Activated T-helper 1 cell treated with anti-CD3 and anti-CD28 coated beads, Interleukin-12 subunit alpha, Interleukin-12 subunit beta, Interleukin-2, Interleukin-4 antibody, amounts not matched to agents 30 ng/mL and 10 ng/mL and 1 ng/mL, durations not matched to agents 14 hours and 24 hours and 36 hours (primary cell): ENCODE measurements at regions of chr15 and their contacts with region 1.

Region 1: GRCh38 chr15:57213862-57214261 is 162.4 kb upstream of the CGNL1 start:
- DNase-seq: no peak
- H3K4me3 Mint-ChIP-seq: no peak overlapping the region
- H3K27ac Mint-ChIP-seq: no peak overlapping the region
- H3K4me1 Mint-ChIP-seq: peaks cover 1% of the 10 kb centered on the region
- H3K27me3 Mint-ChIP-seq: no peaks in the 10 kb centered on the region

Region 2: GRCh38 chr15:56464893-56465520 is 748.9 kb before region 1 on chr15 and contains the start of gene MNS1:
- intact Hi-C with region 1: loop called (anchors 10 kb)
- DNase-seq: peak; percentile 70
- H3K4me3 Mint-ChIP-seq: peak within 1 kb of the TSS; percentile 93
- H3K27ac Mint-ChIP-seq: peak within 1 kb of the TSS; percentile 74
- H3K4me1 Mint-ChIP-seq: peaks cover 28% of the 10 kb centered on the region
- H3K27me3 Mint-ChIP-seq: peaks cover 32% of the 10 kb centered on the region
- total RNA-seq, gene MNS1: 0.17 and 0.44 TPM in 2 replicates

Region 3: GRCh38 chr15:56491110-56491722 is 722.6 kb before region 1 on chr15:
- intact Hi-C with region 1: loop called (anchors 1 kb)
- DNase-seq: peak; percentile 43
- H3K4me3 Mint-ChIP-seq: no peak overlapping the region
- H3K27ac Mint-ChIP-seq: no peak overlapping the region
- H3K4me1 Mint-ChIP-seq: no peaks in the 10 kb centered on the region
- H3K27me3 Mint-ChIP-seq: no peaks in the 10 kb centered on the region

Region 4: DNA sequence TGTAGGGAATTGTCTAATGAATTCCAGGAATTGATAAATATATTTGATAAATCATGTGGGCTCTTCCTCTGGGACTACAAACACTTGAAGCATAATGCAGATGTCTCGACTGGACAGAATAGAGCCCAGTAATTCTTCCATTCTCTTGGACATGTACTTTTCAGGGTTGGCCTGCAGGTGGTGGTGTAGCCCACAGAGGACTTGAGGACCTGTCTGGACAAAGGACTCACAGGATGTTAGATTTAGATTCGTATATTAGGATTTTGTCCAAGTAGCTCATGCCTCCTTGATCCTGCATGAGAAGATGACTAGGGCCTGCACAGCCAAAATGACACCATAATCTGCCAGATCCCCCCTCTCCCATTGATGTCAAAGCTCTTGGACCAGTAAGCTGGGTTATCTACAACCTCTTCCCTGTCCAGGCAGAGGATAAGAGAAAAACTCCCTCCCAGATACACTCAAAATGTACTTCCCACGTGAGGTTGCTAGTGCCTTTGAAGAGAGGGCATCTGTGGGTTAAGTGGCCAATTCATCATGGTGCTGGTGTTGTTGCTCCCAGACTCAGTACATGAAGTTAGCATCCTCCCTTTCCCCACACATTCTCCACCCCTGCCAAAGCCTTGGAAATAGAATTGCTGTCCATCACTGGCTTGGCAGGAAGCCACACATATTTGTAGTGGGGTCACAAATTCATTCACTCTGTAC is 392.0 kb before region 1 on chr15:
- intact Hi-C with region 1: loop called (anchors 10 kb)
- DNase-seq: peak; percentile 7
- H3K4me3 Mint-ChIP-seq: no peak overlapping the region
- H3K27ac Mint-ChIP-seq: no peak overlapping the region
- H3K4me1 Mint-ChIP-seq: peaks cover 7% of the 10 kb centered on the region
- H3K27me3 Mint-ChIP-seq: peaks cover 7% of the 10 kb centered on the region

Region 5: DNA sequence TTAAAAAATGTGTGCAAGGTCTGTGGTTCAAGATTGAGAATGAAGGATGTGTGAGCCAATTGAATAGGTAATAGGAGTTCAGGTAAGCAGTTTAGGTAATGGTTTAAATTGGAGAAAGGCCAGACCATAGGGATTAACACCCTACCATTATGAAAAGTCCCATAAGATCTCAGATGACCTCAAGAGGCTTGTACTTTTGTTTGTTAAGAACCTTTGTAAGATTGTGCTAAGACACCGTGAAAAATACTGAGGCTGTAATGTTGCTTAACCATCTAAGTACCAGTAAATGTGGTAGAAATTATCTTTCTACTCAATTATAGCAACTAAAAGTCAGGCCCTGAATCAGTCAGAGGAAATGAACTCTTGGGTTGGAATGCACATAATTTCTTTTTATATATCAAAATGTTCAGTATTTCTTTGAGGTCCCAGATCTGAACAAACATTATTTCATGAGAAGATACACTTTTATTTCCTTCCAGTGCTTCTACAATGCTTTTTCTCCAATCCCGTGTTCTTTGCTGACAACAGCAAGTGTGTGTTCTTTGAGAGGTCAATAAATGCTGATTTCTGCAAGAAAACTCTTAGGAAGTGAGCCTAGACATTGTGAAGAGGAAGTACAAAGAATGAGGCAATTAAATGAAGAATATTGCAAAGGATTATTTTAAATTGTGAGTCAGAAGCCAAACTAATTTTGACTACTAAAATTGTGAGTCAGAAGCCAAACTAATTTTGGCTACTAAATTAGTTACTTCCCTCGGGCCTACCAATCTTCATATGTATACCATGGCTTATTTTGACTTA is 229.0 kb before region 1 on chr15:
- intact Hi-C with region 1: loop called (anchors 10 kb)
- DNase-seq: no peak
- H3K4me3 Mint-ChIP-seq: no peak overlapping the region
- H3K27ac Mint-ChIP-seq: no peak overlapping the region
- H3K4me1 Mint-ChIP-seq: peaks cover 25% of the 10 kb centered on the region
- H3K27me3 Mint-ChIP-seq: no peaks in the 10 kb centered on the region

Region 6: DNA sequence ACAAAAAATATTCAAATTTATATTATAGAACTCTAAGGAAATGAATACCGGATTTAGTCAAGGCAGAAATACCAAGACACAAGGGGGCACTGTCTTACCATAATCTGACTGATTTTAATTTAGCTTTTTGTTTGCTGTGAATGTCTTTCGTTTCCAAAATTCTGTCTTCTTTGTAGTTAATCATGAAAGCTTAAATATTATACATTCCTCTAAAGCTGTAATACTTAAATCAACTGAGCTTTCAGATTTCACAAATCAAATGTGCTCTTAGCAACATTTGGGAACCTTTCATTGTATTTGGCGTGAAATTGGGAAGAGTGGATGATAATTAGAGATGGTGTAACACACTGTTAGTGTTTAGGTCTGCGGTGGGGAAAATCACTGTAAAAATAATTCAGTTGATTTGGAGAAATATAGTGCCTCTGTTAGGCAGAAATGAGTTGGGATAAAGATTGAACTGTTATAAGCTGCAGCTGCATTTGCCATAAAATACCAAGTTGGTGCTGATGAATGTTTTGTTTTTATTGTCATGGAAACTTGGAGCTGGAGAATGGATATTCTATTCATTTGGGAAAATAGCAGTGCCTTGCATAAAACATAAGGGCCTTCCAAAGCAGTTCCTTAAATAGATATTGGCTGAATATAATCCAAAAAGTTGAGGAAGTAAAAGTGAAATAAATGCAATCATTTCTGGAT is 67.2 kb before region 1 on chr15:
- intact Hi-C with region 1: loop called (anchors 1 kb)
- DNase-seq: no peak
- H3K4me3 Mint-ChIP-seq: no peak overlapping the region
- H3K27ac Mint-ChIP-seq: no peak overlapping the region
- H3K4me1 Mint-ChIP-seq: peaks cover 11% of the 10 kb centered on the region
- H3K27me3 Mint-ChIP-seq: no peaks in the 10 kb centered on the region

Region 7: DNA sequence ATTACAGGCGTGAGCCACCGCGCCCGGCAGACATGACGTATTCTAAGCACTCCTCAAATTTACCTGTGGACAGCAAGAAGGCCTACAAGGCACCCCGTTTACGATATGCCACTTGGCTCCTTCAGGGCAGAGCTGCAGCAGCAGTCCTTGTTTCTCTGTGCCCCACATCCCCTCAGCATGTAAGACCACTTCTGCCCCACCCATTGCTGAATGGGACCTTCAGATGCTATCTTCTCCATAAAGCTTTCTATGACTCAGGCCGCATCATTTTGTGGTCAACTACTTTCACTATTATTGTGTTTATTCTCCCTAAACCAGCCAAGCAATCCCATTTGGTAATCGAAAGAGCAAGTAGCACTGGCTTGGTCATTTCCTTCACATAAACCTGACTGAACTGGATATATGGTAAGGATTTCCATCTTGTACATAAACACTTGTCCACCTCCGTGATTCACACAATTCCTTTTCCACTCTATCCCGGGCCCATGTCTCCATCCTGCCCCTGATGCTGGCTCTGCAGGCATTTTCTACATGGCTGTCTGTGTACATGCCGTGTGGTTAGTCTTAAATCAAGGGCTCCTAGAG is 1243.6 kb after region 1 on chr15:
- intact Hi-C with region 1: no loop called
- DNase-seq: peak; percentile 26
- H3K4me3 Mint-ChIP-seq: peak overlapping the region; percentile 29
- H3K27ac Mint-ChIP-seq: peak overlapping the region; percentile 84
- H3K4me1 Mint-ChIP-seq: peaks cover 87% of the 10 kb centered on the region
- H3K27me3 Mint-ChIP-seq: no peaks in the 10 kb centered on the region